ENCODE measurements at regions of chr16 and their contacts with region 1.

Region 1: DNA sequence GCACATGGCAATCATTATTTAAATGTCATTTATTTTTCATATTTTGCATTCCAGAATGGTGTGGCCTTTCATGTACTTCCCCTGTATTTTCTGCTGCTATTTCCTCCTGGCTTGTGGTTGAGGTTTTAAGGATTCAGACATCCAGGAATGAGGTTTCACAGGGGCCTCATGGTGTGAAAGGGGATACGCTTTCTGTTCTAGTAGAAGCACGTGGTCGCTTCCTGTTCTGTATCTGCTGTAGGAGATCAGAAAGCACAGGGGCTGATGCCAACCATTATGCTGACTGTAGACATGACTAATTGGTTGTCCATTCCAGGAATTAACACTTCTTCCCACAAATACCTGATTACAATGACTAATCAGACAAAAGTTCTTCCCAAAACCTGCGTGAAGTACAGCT is 405.9 kb downstream of the SHISA9 start:
- DNase-seq: peak; percentile 96
- H3K4me3 ChIP-seq: no peak overlapping the region
- H3K27ac ChIP-seq: peak overlapping the region; percentile 57
- H3K4me1 ChIP-seq: peaks cover 37% of the 10 kb centered on the region
- H3K27me3 ChIP-seq: no peaks in the 10 kb centered on the region
- CTCF ChIP-seq: no peak

Region 2: GRCh38 chr16:12917653-12918052 is 389.6 kb before region 1 on chr16:
- CTCF ChIA-PET with region 1: no interaction called
- dilution Hi-C with region 1: no loop called
- in situ Hi-C with region 1: no loop called
- intact Hi-C with region 1: no loop called
- DNase-seq: no peak
- H3K4me3 ChIP-seq: no peak overlapping the region
- H3K27ac ChIP-seq: no peak overlapping the region
- H3K4me1 ChIP-seq: no peaks in the 10 kb centered on the region
- H3K27me3 ChIP-seq: no peaks in the 10 kb centered on the region
- CTCF ChIP-seq: no peak

Region 3: GRCh38 chr16:13148836-13149235 is 158.4 kb before region 1 on chr16:
- CTCF ChIA-PET with region 1: no interaction called
- dilution Hi-C with region 1: no loop called
- in situ Hi-C with region 1: no loop called
- intact Hi-C with region 1: no loop called
- DNase-seq: no peak
- H3K4me3 ChIP-seq: no peak overlapping the region
- H3K27ac ChIP-seq: no peak overlapping the region
- H3K4me1 ChIP-seq: peaks cover 15% of the 10 kb centered on the region
- H3K27me3 ChIP-seq: no peaks in the 10 kb centered on the region
- CTCF ChIP-seq: no peak

Region 4: GRCh38 chr16:13168091-13168572 is 139.1 kb before region 1 on chr16:
- CTCF ChIA-PET with region 1: no interaction called
- dilution Hi-C with region 1: no loop called
- in situ Hi-C with region 1: no loop called
- intact Hi-C with region 1: loop called (anchors 5 kb)
- DNase-seq: peak; percentile 88
- H3K4me3 ChIP-seq: peak overlapping the region in 1 of 3 experiments; percentile 10
- H3K27ac ChIP-seq: peak overlapping the region; percentile 22
- H3K4me1 ChIP-seq: peaks cover 15% of the 10 kb centered on the region
- H3K27me3 ChIP-seq: no peaks in the 10 kb centered on the region
- CTCF ChIP-seq: no peak

Region 5: DNA sequence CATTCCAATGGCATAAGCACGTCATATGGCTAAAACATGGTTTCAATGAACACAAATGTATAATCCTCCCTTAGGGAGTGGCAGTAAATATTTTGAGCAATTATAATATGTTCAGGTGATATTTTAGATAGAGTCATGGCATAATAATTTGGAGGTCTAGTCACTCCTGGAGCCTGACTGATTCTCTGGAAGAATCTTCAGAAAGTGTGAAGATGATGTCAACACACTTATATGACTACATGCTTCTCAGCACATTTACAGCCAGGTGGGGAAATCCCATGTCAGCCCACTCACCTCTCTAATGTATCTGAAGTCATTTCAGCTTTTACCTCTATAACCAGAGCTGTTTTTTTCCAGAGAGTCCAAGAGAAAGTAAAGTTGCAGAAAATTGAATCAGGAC is 68.9 kb after region 1 on chr16:
- CTCF ChIA-PET with region 1: no interaction called
- dilution Hi-C with region 1: no loop called
- in situ Hi-C with region 1: no loop called
- intact Hi-C with region 1: loop called (anchors 1 kb)
- DNase-seq: peak; percentile 71
- H3K4me3 ChIP-seq: no peak overlapping the region
- H3K27ac ChIP-seq: no peak overlapping the region
- H3K4me1 ChIP-seq: peaks cover 9% of the 10 kb centered on the region
- H3K27me3 ChIP-seq: no peaks in the 10 kb centered on the region
- CTCF ChIP-seq: no peak